Caco-2 (cell line): ENCODE measurements at regions of chr2 and their contacts with region 1.

Region 1: DNA sequence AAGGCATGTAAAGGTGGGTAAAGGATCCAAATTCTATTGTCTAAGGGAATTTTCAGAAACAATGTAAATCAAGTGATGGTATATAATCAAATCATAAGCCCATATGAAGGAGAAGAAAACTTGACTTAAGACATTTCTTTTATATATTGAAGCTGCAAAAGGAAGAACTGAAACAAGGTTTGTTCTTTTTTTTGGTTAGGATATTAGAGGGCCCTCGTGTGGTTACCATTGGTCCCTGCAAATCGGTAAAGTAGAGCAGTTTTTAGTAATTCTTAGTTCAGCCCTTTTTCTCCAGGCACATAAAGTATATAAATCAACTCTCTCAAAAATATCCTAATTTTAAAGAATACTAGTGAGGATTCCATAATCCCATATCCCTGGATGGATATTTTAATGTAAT is 105.6 kb upstream of the STK17B start:
- DNase-seq: peak in 1 of 2 experiments; percentile 14
- H3K4me3 ChIP-seq: no peak overlapping the region
- H3K4me3 Mint-ChIP-seq: no peak overlapping the region
- H3K27ac Mint-ChIP-seq: no peak overlapping the region
- H3K4me1 ChIP-seq: peaks cover 48% of the 10 kb centered on the region
- H3K4me1 Mint-ChIP-seq: peaks cover 38% of the 10 kb centered on the region
- H3K27me3 ChIP-seq: no peaks in the 10 kb centered on the region
- H3K27me3 Mint-ChIP-seq: no peaks in the 10 kb centered on the region
- CTCF ChIP-seq: peak; percentile 46 to 50

Region 2: GRCh38 chr2:196076778-196077568 is 200.0 kb before region 1 on chr2:
- CTCF ChIA-PET with region 1: interaction called, 11 read pairs
- POLR2A ChIA-PET with region 1: no interaction called
- intact Hi-C with region 1: loop called (anchors 1 kb)
- DNase-seq: no peak
- H3K4me3 ChIP-seq: no peak overlapping the region
- H3K4me3 Mint-ChIP-seq: no peak overlapping the region
- H3K27ac Mint-ChIP-seq: no peak overlapping the region
- H3K4me1 ChIP-seq: peaks cover 8% of the 10 kb centered on the region
- H3K4me1 Mint-ChIP-seq: peaks cover 7% of the 10 kb centered on the region
- H3K27me3 ChIP-seq: no peaks in the 10 kb centered on the region
- H3K27me3 Mint-ChIP-seq: no peaks in the 10 kb centered on the region
- CTCF ChIP-seq: no peak

Region 3: GRCh38 chr2:196117214-196117705 is 159.7 kb before region 1 on chr2:
- CTCF ChIA-PET with region 1: no interaction called
- POLR2A ChIA-PET with region 1: no interaction called
- intact Hi-C with region 1: no loop called
- DNase-seq: no peak
- H3K4me3 ChIP-seq: no peak overlapping the region
- H3K4me3 Mint-ChIP-seq: no peak overlapping the region
- H3K27ac Mint-ChIP-seq: no peak overlapping the region
- H3K4me1 ChIP-seq: 0 out of 2 replicates have a peak, but pooled peaks cover 3% of the 10 kb centered on the region
- H3K4me1 Mint-ChIP-seq: no peaks in the 10 kb centered on the region
- H3K27me3 ChIP-seq: no peaks in the 10 kb centered on the region
- H3K27me3 Mint-ChIP-seq: no peaks in the 10 kb centered on the region
- CTCF ChIP-seq: no peak

Region 4: GRCh38 chr2:196171248-196171871 is 105.6 kb before region 1 on chr2 and contains the start of gene STK17B:
- CTCF ChIA-PET with region 1: interaction called, 4 read pairs
- POLR2A ChIA-PET with region 1: interaction called, 6 read pairs
- intact Hi-C with region 1: loop called (anchors 1 kb)
- DNase-seq: peak; percentile 96 to 97
- H3K4me3 ChIP-seq: peak within 1 kb of the TSS; percentile 96
- H3K4me3 Mint-ChIP-seq: peak within 1 kb of the TSS; percentile 97
- H3K27ac Mint-ChIP-seq: peak within 1 kb of the TSS; percentile 83
- H3K4me1 ChIP-seq: peaks cover 19% of the 10 kb centered on the region
- H3K4me1 Mint-ChIP-seq: peaks cover 30% of the 10 kb centered on the region
- H3K27me3 ChIP-seq: no peaks in the 10 kb centered on the region
- H3K27me3 Mint-ChIP-seq: no peaks in the 10 kb centered on the region
- CTCF ChIP-seq: peak in 1 of 2 experiments; percentile 0
- total RNA-seq, gene STK17B: 54.7 and 58.0 TPM in 2 replicates

Region 5: DNA sequence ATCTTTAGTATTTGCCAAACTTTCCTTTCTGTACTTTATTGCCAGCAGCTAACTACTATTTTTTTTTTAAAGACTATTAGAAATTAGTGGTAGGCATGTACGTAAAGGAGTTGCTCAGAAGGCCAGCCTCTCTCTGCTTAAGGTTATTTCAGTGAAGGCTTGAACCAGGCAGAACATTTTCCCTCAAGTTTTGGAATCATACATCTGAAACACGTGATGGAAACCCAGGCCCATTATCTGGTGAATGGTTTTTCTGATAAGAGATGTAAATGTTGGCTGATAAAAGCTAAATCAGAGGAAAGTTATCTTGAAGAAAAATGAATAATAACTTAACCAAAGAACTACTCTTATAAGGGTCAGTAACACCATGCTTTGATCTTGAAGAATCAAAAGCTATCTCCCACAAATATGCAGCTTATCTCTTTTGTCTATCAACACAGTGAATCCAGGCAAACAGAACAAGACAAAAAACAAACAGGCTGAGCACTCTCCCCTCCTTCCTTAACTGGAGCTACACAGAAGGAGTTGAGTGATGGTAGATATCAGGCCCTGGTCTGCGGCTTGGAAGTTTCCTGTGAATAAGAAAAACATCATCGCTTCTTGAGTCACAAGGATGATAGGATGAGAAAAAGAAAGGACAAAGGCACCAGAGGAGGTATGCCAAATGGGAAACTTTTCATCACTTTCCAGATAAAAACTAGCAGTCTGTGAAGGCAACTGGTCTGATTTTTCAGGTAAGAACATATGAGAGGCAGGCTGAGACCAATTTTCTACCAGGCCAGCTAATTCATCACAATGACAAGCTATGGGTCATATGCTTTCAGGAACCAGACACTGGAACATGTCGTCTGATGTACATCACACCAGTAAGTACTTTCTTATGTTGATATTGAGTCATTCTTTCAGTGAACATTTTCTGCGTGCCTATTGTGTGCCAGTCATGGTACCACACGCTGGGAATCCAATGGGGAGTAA is 17.2 kb before region 1 on chr2:
- CTCF ChIA-PET with region 1: interaction called, 10 read pairs
- POLR2A ChIA-PET with region 1: interaction called, 14 read pairs
- intact Hi-C with region 1: loop called (anchors 1 kb)
- DNase-seq: peak; percentile 88 to 91
- H3K4me3 ChIP-seq: peak overlapping the region; percentile 36
- H3K4me3 Mint-ChIP-seq: peak overlapping the region; percentile 90
- H3K27ac Mint-ChIP-seq: peak overlapping the region; percentile 90
- H3K4me1 ChIP-seq: peaks cover 31% of the 10 kb centered on the region
- H3K4me1 Mint-ChIP-seq: peaks cover 17% of the 10 kb centered on the region
- H3K27me3 ChIP-seq: no peaks in the 10 kb centered on the region
- H3K27me3 Mint-ChIP-seq: no peaks in the 10 kb centered on the region
- CTCF ChIP-seq: no peak

Region 6: GRCh38 chr2:196293751-196294512 is 16.9 kb after region 1 on chr2:
- CTCF ChIA-PET with region 1: no interaction called
- POLR2A ChIA-PET with region 1: no interaction called
- intact Hi-C with region 1: loop called (anchors 1 kb)
- DNase-seq: no peak
- H3K4me3 ChIP-seq: no peak overlapping the region
- H3K4me3 Mint-ChIP-seq: no peak overlapping the region
- H3K27ac Mint-ChIP-seq: no peak overlapping the region
- H3K4me1 ChIP-seq: peaks cover 28% of the 10 kb centered on the region
- H3K4me1 Mint-ChIP-seq: peaks cover 21% of the 10 kb centered on the region
- H3K27me3 ChIP-seq: no peaks in the 10 kb centered on the region
- H3K27me3 Mint-ChIP-seq: no peaks in the 10 kb centered on the region
- CTCF ChIP-seq: no peak

Region 7: DNA sequence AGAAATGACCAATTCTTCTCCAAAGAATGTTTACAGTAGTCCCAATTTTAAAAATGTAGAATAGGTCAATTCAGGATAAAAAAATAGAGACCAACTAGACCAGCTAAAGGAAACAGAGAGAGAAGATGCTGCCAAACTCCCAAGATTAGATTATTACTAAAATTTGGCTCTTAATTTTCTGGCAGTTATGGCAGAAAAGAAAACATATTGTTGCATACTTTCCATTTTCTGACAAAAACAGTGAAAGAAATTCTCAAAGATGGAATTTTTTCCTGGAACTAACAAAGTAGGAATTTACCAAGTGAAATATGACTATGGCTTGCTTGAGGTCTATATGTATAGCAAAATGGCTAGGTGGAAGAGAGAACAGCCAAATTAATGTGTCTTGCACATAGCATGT is 32.7 kb after region 1 on chr2:
- CTCF ChIA-PET with region 1: no interaction called
- POLR2A ChIA-PET with region 1: no interaction called
- intact Hi-C with region 1: no loop called
- DNase-seq: no peak
- H3K4me3 ChIP-seq: no peak overlapping the region
- H3K4me3 Mint-ChIP-seq: no peak overlapping the region
- H3K27ac Mint-ChIP-seq: no peak overlapping the region
- H3K4me1 ChIP-seq: no peaks in the 10 kb centered on the region
- H3K4me1 Mint-ChIP-seq: peaks cover 3% of the 10 kb centered on the region
- H3K27me3 ChIP-seq: no peaks in the 10 kb centered on the region
- H3K27me3 Mint-ChIP-seq: no peaks in the 10 kb centered on the region
- CTCF ChIP-seq: no peak